ENCODE measurements at regions of chr11 and their contacts with region 1.

Region 1: GRCh38 chr11:16820324-16821092 is 82.1 kb downstream of the C11orf58 start:
- DNase-seq: peak in 1 of 2 donors; percentile 91
- H3K4me3 ChIP-seq: no peak overlapping the region
- H3K27ac ChIP-seq: no peak overlapping the region
- H3K4me1 ChIP-seq: no peaks in the 10 kb centered on the region
- H3K27me3 ChIP-seq: no peaks in the 10 kb centered on the region
- CTCF ChIP-seq: peak; percentile 61 to 88 (median 80)

Region 2: GRCh38 chr11:16204261-16204660 is 616.2 kb before region 1 on chr11:
- intact Hi-C with region 1: no loop called
- DNase-seq: no peak
- H3K4me3 ChIP-seq: no peak overlapping the region
- H3K27ac ChIP-seq: no peak overlapping the region
- H3K4me1 ChIP-seq: no peaks in the 10 kb centered on the region
- H3K27me3 ChIP-seq: no peaks in the 10 kb centered on the region
- CTCF ChIP-seq: no peak

Region 3: GRCh38 chr11:17063171-17064002 is 242.9 kb after region 1 on chr11:
- intact Hi-C with region 1: loop called (anchors 1 kb)
- DNase-seq: no peak
- H3K4me3 ChIP-seq: no peak overlapping the region
- H3K27ac ChIP-seq: no peak overlapping the region
- H3K4me1 ChIP-seq: no peaks in the 10 kb centered on the region
- H3K27me3 ChIP-seq: no peaks in the 10 kb centered on the region
- CTCF ChIP-seq: peak in 2 of 3 experiments; percentile 30 to 64

Region 4: DNA sequence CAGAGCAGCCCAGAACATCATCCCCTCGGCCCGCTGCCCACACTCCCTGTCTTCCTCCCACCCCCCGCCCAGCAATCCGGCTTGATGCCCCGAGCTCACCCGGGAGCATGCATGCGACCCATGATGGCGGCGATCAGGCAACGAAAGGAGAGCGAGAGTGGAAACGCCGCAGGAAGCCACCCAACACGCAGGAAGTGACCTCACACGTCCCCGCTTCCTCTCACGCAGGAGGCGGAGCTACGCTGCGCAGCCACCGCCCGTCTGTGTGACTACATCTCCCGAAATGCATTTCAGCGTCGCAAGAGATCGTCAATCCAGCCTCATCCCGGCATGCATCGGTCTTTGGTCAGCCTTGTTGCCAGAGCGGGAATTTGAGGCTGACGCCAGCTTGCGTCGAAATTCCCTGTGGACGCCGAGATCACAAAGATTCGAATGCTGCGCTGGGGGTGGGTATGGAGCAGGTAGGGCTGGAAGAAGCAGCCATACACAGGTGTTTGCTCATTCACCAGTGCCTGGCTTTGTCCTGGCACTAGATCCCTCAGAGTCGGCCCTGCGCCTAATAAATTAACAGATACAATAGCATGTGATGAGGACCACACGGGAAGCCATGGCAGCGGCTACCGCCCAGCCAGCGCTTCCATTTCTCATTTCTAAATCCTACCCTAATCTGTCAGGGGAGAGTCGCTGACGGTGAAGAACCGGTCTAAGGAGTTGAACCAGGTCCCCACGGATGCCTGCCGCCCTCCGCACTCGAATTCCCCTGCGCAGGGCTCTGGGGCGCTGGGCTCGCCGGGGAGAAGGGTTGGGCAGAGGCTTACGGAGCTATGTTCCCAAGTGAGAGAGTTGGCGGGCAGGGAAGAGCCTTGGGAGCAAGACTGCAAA is 257.3 kb after region 1 on chr11 and contains the start of gene RPS13:
- intact Hi-C with region 1: no loop called
- DNase-seq: peak; percentile 90 to 98
- H3K4me3 ChIP-seq: peak within 1 kb of the TSS; percentile 87 to 97
- H3K27ac ChIP-seq: peak within 1 kb of the TSS; percentile 92 to 93
- H3K4me1 ChIP-seq: peaks cover 8 to 23% of the 10 kb centered on the region in 2 donors
- H3K27me3 ChIP-seq: no peaks in the 10 kb centered on the region
- CTCF ChIP-seq: no peak
- total RNA-seq, gene RPS13: 987 TPM